Activated T-helper 1 cell treated with anti-CD3 and anti-CD28 coated beads, Interleukin-12 subunit alpha, Interleukin-12 subunit beta, Interleukin-2, Interleukin-4 antibody, amounts not matched to agents 30 ng/mL and 10 ng/mL and 1 ng/mL, durations not matched to agents 14 hours and 24 hours and 36 hours (primary cell): ENCODE measurements at regions of chr17 and their contacts with region 1.

Region 1: DNA sequence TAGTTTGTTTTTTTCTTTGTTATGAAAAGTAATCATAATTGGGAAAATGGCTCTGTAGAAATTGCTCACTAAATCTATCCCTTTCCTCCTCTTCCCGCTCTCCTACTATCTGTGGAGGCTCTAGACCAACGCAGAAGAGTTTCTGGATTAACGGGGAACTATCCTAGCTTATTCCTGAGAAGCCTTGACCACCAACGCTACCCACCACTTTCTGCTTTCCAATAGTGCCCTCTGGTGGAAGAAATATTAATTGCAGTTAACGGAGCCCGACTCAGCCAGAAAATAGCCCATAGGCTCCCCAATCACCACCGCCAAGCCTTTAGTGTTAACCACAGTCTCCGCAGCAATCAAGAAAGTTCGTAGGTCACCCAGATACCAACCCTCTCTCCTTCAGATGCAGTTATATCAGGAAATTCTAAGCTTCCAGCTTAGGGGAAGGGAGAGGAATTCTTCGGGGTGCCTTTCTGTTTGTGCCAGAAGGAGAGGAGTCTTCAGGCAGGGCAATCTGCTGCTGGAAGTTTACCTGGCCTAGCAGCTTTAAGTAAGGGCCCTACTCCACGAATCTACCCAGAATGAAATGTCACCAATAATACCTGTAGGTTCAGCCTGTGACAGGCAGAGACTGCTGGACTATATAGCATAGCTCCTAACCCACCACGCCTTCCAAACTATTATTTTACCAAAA is 23.0 kb upstream of the NSRP1 start:
- DNase-seq: peak; percentile 25
- H3K4me3 Mint-ChIP-seq: no peak overlapping the region
- H3K27ac Mint-ChIP-seq: no peak overlapping the region
- H3K4me1 Mint-ChIP-seq: peaks cover 9% of the 10 kb centered on the region
- H3K27me3 Mint-ChIP-seq: peaks cover 39% of the 10 kb centered on the region

Region 2: GRCh38 chr17:29633886-29634285 is 459.7 kb before region 1 on chr17:
- intact Hi-C with region 1: loop called (anchors 10 kb)
- DNase-seq: no peak
- H3K4me3 Mint-ChIP-seq: no peak overlapping the region
- H3K27ac Mint-ChIP-seq: peak overlapping the region; percentile 24
- H3K4me1 Mint-ChIP-seq: peaks cover 23% of the 10 kb centered on the region
- H3K27me3 Mint-ChIP-seq: no peaks in the 10 kb centered on the region

Region 3: GRCh38 chr17:30005709-30006320 is 87.8 kb before region 1 on chr17:
- intact Hi-C with region 1: no loop called
- DNase-seq: no peak
- H3K4me3 Mint-ChIP-seq: no peak overlapping the region
- H3K27ac Mint-ChIP-seq: no peak overlapping the region
- H3K4me1 Mint-ChIP-seq: peaks cover 4% of the 10 kb centered on the region
- H3K27me3 Mint-ChIP-seq: peaks cover 2% of the 10 kb centered on the region

Region 4: GRCh38 chr17:30021708-30022317 is 71.8 kb before region 1 on chr17:
- intact Hi-C with region 1: loop called (anchors 1 kb)
- DNase-seq: peak; percentile 16
- H3K4me3 Mint-ChIP-seq: no peak overlapping the region
- H3K27ac Mint-ChIP-seq: no peak overlapping the region
- H3K4me1 Mint-ChIP-seq: no peaks in the 10 kb centered on the region
- H3K27me3 Mint-ChIP-seq: peaks cover 11% of the 10 kb centered on the region

Region 5: GRCh38 chr17:30158896-30159625 is 65.5 kb after region 1 on chr17:
- intact Hi-C with region 1: no loop called
- DNase-seq: no peak
- H3K4me3 Mint-ChIP-seq: no peak overlapping the region
- H3K27ac Mint-ChIP-seq: no peak overlapping the region
- H3K4me1 Mint-ChIP-seq: no peaks in the 10 kb centered on the region
- H3K27me3 Mint-ChIP-seq: no peaks in the 10 kb centered on the region

Region 6: DNA sequence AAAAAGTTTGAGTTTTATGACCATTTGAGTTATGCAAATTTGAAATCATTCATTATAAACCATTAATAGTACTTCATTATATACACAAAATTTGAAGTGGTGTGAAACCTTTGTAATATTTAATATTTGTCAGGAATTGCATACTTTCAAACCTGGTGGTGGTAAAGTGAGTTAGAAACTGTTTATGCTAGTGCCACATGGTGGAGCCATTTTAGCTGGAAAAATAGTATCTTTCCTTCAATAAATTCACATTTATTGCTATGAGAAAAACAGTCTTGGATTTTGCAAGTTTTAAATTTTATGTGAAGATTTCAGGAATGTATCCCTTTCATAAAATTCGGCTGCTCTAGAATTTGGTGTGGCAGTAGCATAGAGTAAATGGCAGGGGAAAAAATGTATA is 205.4 kb after region 1 on chr17:
- intact Hi-C with region 1: no loop called
- DNase-seq: no peak
- H3K4me3 Mint-ChIP-seq: no peak overlapping the region
- H3K27ac Mint-ChIP-seq: no peak overlapping the region
- H3K4me1 Mint-ChIP-seq: peaks cover 8% of the 10 kb centered on the region
- H3K27me3 Mint-ChIP-seq: no peaks in the 10 kb centered on the region